ENCODE measurements at regions of chr4 and their contacts with region 1.

Region 1: GRCh38 chr4:137794764-137795254 is 262.5 kb upstream of the PCDH18 start:
- DNase-seq: no peak

Region 2: GRCh38 chr4:137754652-137755471 is 39.9 kb before region 1 on chr4:
- intact Hi-C with region 1: no loop called
- DNase-seq: no peak

Region 3: GRCh38 chr4:138334346-138335016 is 539.7 kb after region 1 on chr4:
- intact Hi-C with region 1: no loop called
- DNase-seq: no peak

Region 4: DNA sequence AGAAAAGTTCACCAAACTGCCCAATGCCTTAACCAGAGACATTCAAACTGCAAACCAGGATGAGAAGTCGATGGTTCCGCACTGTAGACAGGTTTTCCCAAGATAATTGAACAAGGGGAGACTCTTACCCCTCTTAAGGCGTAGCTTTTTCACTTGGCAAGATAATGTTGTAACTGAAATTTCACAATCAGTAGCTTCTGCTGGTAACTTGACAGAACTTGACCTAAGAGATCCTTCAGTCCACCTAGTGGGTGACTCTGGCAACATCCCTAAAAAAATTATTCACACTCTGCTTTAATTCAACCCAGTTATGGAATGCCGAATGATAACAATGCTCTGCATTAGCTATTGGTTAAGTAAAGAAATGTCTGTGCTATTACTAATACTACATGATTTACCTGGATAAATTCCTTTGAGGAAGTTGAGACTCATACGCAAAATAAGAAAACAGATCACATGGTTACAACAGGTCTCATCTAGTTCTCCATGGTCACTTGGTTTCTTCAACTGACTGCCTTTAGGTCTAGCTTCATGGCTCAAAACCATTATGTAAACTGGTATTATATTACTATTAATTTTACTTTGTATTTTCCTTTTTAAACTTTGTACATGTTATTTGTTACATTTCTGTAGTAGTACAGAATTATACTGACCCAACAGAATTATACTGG is 1373.1 kb after region 1 on chr4:
- intact Hi-C with region 1: loop called in 1 of 2 experiments (anchors 10 kb)
- DNase-seq: no peak

Measured in posterior vena cava (tissue), 2 donors.